Mucosa of descending colon (tissue), 3 donors: ENCODE measurements at regions of chr18 and their contacts with region 1.

Region 1: DNA sequence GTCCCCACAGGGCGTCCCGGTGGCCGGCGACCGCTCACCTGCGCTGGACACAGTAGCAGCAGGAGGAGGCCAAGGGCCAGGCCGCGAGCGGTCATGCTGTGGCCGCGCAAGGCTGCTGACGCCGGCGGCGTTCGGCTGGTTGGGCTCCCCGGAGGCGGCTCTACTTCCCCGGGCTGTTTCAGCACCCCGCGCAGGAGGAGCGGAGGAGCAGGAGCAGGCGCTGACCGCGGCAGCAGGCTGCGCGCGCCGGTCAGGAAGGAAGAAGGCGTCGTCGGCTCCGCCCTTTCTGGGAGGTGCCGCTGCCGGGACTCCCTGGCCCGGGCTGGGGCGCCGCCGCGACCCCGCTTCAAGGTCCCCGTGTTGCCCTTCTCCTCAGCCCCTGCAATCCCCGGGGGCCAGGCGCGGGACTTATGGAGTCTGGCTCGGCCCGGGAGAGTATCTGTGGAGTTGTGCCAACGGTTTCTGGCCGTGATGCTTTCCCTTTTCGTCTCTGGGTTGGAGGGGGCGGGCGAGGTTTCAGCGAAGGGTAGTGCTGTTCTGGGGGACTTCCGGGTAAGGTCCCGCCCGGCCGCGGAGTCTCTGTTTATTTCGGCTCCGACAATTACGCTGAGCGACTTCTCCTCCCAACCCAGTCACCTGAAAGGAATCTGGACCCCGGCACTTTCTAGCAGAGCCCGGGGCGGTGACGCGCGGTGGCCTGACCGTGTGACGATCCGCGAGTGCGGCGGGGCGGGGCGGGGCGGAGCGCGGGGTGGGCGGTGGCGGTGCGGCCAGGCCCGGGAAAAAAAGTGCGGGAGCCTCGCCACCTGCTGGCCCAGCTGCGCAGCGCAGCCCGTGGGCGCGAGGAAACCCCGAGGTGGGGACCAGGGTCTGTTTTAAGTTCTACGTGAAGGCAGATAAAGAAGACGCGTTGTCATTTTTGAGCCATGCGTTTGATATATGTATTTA is at the start of gene NPC1:
- DNase-seq: peak; percentile 94 to 96 (median 96)
- ATAC-seq: peak; percentile 95
- H3K4me3 ChIP-seq: peak within 1 kb of the TSS; percentile 58
- H3K4me1 ChIP-seq: peaks cover 19% of the 10 kb centered on the region
- CTCF ChIP-seq: peak; percentile 97
- total RNA-seq, gene NPC1: 35.5 to 51.0 (median 41.2) TPM

Region 2: GRCh38 chr18:23479829-23480505 is 106.6 kb before region 1 on chr18:
- intact Hi-C with region 1: no loop called
- DNase-seq: no peak
- ATAC-seq: peak; percentile 16
- H3K4me3 ChIP-seq: no peak overlapping the region
- H3K4me1 ChIP-seq: no peaks in the 10 kb centered on the region
- CTCF ChIP-seq: no peak

Region 3: DNA sequence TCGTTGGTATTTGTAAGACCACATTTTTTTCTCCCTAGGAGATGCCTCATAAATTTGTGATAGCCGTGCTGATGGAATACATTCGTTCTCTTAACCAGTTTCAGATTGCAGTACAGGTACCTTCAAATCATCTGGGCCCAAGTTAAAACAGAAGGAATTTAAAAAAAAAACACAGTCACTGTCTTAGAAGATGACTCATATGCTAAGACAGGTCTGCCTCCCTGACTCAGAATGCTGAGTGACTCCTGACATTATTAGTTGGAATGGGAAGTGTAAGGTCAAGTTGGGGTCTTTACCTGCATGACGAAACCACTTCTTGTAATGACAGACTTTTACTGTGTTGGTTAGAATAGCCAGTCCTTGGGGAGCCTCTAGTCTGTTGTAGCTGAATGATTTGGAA is 56.9 kb before region 1 on chr18:
- intact Hi-C with region 1: loop called in 1 of 2 experiments (anchors 10 kb)
- DNase-seq: no peak
- ATAC-seq: no peak
- H3K4me3 ChIP-seq: no peak overlapping the region
- H3K4me1 ChIP-seq: no peaks in the 10 kb centered on the region
- CTCF ChIP-seq: no peak

Region 4: DNA sequence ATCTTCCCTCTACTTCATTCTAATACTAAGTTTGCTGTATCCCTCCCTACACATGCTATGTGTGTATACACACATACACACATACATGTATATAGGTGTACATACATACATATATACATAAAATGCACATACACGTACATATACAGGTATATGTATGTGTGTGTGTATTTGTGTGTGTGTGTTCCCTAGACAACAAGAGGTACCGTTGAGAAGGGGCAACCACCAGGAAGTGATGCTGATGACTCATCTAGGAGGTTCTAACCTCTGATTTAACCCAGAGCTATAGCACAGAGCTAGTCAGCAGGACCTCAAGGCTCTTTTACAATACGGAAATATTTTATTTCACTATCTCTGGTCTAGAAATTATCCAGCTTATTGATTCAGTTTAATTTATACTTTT is 241.9 kb after region 1 on chr18:
- intact Hi-C with region 1: no loop called
- DNase-seq: no peak
- ATAC-seq: peak; percentile 96
- H3K4me3 ChIP-seq: no peak overlapping the region
- H3K4me1 ChIP-seq: no peaks in the 10 kb centered on the region
- CTCF ChIP-seq: no peak